ENCODE measurements at regions of chr13 and their contacts with region 1.

Region 1: GRCh38 chr13:87274209-87274819 is 396.9 kb upstream of the SLITRK5 start:
- DNase-seq: peak; percentile 19
- H3K27ac ChIP-seq: no peak overlapping the region
- CTCF ChIP-seq: peak; percentile 67

Region 2: DNA sequence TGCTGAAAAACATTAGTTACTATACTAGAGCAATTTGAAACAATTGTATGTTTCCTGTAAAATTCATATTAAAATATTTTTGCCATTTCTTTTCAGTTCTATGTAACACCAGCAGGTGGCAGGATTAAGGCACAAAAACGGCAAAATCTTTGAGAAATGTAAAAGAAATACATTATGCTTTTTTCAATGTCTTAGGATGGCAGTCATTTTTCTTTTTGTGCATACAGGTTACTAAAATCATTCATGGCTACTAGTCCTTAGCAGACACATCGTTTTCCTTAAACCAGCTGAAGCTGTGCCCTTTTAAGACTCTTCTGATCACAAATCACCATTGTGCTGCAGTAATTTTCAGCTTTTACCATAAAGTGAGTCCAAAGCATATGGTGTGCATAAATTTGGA is 403.9 kb before region 1 on chr13:
- CTCF ChIA-PET with region 1: interaction called, 12 read pairs
- POLR2A ChIA-PET with region 1: no interaction called
- DNase-seq: no peak
- H3K27ac ChIP-seq: no peak overlapping the region
- CTCF ChIP-seq: peak; percentile 65

Region 3: DNA sequence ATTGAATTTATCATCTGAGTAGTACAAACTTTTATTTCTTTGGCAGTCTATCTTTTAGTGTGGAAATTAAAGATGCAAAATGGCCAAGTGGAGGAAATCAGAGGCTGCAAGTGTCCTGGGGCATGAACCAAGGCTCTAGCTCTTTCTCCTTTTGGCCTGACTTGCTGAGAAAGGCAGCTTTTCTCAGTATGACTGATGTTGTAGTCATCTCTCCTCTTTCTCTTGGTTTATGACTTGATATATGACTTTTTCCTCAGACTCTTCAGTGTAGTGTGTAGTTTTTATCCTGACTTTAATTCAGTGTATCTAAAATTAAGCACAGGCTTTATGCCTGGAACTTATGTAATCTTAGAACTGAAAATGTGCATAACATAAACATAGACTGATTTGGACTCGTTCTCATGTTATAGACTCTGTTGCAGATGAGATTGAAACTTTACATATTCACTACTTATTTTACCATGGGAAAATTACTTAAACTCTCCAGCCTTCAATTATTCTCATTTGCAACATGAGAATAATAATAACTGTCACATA is 462.6 kb after region 1 on chr13:
- CTCF ChIA-PET with region 1: no interaction called
- POLR2A ChIA-PET with region 1: no interaction called
- DNase-seq: no peak
- H3K27ac ChIP-seq: no peak overlapping the region
- CTCF ChIP-seq: no peak

Measured in RWPE1 (cell line).